ENCODE measurements at regions of chr19 and their contacts with region 1.

Region 1: GRCh38 chr19:51651216-51651846 is 4.7 kb upstream of the SIGLEC14 start:
- DNase-seq: no peak
- ATAC-seq: no peak

Region 2: DNA sequence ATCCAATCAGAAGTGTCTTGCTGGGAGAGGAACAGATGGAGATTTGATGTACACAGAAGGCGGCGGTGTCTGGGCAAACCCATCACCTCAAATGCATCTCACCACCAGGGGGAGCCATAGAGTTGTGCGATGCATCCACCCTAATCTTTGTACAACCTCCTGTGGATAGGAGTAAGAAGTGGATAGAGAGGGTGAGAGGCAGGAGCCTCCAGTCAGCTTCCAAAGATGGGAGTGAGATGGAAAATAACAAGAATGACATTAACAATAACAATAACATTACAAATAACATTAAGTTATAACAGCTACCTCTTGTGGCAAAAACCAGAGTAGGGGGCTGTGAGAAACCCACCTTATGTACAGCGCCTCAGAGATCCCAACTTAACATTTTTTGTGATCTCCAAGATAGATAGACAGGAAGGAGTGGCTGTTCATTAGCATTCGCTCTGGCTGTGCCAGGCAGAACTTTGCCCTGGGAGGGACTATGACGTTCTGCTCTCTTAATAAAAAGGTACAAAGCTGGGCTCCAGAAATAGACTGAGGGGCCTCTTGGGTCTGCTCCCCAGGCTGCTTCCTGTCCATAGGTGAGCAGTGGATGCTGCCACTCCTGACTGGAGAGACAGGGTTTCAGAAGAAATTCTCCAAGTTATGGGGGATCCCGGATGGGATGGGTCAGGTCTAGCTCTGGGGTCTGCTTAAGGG is 178.2 kb before region 1 on chr19:
- intact Hi-C with region 1: loop called in 1 of 2 experiments (anchors 5 kb)
- DNase-seq: peak; percentile 45 to 88
- ATAC-seq: peak; percentile 59

Region 3: DNA sequence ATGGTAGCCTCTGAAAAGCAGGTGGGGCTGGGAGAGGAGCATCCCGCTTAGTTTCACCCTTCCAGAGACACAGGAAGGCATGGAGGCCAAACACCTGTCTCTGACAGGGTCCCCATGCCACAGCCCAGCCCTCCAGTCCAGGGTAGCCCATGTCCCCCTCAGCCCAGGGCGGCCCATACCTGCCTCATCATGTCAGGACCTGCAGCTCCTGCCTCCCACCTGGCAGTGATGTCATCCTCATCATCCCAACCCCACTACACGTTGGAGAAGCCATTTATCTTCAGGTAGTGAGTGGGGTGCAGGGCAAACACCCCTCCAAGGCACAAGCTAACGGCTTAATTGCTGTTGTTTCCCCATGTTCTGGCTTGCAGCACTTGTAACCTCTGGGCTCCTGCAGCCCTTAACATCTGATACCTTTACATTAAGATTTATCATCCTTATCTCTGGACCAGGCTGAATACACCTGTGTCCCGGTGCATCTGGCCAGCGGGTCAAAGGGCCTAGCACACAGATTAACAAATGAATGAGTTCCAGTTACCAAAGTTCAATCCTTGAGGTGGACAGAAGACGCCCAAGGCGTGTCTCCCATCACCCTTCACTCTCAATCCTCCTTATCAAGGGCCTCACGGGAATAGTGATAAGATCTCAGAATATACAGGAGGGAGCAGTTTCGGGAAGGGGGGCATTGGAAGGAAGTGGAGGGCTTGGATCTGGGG is 58.0 kb before region 1 on chr19:
- intact Hi-C with region 1: no loop called
- DNase-seq: peak in 1 of 2 donors; percentile 11
- ATAC-seq: peak; percentile 31

Region 4: DNA sequence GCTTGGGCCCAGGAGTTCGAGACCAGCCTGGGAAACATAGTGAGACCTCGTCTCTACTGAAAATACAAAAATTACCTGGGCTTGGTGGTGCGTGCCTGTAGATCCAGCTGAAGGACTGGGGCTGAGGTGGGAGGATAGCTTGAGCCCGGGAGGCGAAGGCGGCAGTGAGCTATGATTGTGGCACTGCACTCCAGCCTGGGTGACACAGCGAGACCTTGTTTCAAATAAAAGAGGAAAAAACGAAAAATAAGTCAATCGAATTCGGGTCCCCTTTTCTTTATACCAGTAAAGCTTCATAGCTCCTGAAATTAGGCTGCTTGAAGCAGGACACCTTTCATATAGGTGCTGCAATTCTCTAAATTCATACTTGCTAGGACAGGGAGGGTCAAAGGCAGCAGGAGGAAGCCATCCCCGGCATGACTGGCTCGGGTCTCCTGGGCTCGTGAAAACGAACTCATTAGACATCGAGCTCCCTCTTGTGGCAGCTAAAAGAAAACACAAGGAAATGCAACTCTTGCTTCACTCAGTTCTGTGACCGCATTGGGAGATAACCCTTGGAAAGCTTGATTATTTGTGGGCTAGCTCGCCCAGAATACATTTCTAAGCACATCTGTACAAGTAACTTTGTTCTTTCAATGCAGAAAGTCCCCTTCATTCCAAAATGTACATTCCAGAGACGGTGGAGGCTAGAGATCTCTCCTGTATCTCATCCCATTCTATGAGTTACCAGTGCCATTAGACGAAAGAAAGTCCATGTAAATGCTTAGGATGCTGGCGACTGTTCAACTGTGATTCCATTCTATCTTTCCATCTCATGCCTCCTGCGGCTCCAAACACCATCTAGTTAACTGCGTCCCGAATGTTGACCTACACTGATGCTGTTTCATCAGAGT is 126.5 kb after region 1 on chr19:
- intact Hi-C with region 1: loop called in 1 of 2 experiments (anchors 10 kb)
- DNase-seq: peak; percentile 21 to 49
- ATAC-seq: peak; percentile 69

Region 5: DNA sequence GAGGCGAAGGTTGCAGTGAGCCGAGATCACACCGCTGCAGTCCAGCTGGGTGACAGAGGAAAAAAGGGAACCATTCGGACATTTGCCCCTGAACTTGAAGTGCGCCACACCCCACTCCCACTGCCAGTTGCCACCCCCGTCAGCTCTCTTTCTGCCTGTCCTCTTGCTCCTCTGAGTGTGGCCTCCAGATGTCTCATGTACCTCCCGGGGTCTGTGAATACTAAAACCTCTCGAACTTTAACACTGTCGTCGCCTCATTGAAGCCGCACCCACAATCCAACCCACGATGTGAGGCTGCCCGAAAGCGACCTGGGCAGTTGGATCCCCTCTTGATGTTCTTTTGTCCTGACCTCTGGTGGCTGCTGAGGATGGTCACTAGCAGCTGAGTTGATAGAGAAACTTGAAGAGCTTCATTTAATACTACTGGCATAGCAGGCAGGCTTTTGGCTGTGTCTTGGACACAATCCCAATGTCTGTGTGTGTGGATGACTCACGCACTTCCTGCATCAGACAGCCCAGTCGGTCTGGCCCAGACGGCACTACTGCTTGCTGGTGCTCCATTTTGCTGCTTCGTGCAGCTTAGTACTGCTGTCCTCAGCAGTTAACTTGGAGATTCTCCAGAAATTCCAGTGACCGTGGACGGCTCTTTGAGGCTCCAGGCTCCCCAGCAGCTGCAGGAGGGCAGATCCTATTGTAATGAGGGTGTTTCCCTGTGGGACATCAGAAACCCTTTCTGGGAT is 147.9 kb after region 1 on chr19:
- intact Hi-C with region 1: no loop called
- DNase-seq: peak; percentile 42 to 74
- ATAC-seq: no peak